Upper lobe of right lung (tissue), 1 donor: ENCODE measurements at regions of chr1 and their contacts with region 1.

Region 1: GRCh38 chr1:23959041-23959460 is 577 bp upstream of the PNRC2 start:
- DNase-seq: peak; percentile 94
- ATAC-seq: peak; percentile 90
- H3K4me3 ChIP-seq: peak overlapping the region; percentile 76
- H3K27ac ChIP-seq: peak overlapping the region; percentile 99
- H3K4me1 ChIP-seq: peaks cover 38% of the 10 kb centered on the region
- H3K27me3 ChIP-seq: no peaks in the 10 kb centered on the region
- CTCF ChIP-seq: no peak

Region 2: GRCh38 chr1:24027838-24028468 is 68.9 kb after region 1 on chr1:
- intact Hi-C with region 1: loop called (anchors 10 kb)
- DNase-seq: no peak
- ATAC-seq: peak; percentile 70
- H3K4me3 ChIP-seq: no peak overlapping the region
- H3K27ac ChIP-seq: no peak overlapping the region
- H3K4me1 ChIP-seq: peaks cover 3% of the 10 kb centered on the region
- H3K27me3 ChIP-seq: no peaks in the 10 kb centered on the region
- CTCF ChIP-seq: peak; percentile 65

Region 3: DNA sequence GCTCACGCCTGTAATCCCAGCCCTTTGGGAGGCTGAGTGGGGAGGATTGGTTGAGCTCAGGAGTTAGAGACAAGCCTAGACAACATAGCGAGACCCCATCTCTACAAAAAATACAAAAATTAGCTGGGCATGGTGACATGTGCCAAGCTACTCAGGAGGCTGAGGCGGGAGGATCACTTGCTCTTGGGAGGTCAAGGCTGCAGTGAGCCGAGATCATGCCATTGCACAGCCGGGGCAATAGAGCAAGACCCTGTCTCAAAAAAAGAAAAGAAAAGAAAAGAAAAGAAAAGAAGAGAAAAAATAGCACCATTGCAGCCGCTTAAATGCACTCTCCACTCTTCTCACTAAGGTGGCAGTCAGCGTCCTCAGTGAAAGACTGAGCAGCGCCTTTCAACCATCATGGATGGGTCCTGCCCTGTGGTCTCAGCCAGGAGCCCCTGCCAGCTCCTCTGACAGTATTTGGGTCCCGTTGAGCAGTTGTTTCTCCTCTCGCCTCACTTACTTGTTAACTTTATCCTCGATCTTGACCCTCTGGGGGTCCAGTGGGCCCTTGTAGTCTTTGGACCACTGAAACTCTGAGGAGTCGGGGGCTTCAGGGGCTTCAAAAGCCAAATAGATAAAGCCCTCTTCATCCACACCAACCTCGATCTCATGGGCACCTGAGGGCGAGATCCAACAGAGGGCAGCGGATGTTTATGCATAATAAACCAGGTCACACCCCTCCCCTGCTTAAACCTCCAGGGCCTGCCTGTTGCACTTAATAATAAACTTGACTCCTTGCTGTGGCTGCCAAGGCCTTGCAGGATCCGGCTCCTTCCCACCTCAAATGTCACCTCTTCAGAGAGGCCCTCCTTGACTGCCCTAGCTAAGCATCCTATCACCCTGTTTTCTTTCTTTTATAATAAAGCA is 116.0 kb after region 1 on chr1:
- intact Hi-C with region 1: no loop called
- DNase-seq: no peak
- ATAC-seq: no peak
- H3K4me3 ChIP-seq: no peak overlapping the region
- H3K27ac ChIP-seq: no peak overlapping the region
- H3K4me1 ChIP-seq: peaks cover 6% of the 10 kb centered on the region
- H3K27me3 ChIP-seq: no peaks in the 10 kb centered on the region
- CTCF ChIP-seq: no peak